GM18951 (cell line): ENCODE measurements at regions of chr14 and their contacts with region 1.

Region 1: DNA sequence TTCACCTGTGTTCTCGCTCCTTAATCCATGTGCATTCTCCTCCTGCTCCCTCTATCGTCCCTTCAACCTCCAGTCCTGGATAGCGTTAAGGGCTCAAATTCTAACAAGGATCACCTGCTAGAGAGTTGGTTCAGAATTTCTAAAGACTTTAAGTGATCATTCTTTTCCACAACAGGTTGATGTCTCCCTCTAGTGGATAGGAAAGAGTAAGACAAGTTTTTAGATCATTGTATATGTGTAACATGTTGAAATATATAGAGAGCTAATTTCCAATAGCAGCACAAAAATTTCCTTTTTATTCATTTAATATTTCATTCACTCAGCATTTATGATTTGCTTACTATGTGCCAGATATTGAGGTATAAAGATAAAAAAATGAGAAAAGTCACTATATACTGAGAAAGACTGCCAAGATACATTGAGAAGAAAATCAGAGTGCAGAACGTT is 9.3 kb upstream of the ESR2 start:
- POLR2A ChIP-seq: no peak

Region 2: DNA sequence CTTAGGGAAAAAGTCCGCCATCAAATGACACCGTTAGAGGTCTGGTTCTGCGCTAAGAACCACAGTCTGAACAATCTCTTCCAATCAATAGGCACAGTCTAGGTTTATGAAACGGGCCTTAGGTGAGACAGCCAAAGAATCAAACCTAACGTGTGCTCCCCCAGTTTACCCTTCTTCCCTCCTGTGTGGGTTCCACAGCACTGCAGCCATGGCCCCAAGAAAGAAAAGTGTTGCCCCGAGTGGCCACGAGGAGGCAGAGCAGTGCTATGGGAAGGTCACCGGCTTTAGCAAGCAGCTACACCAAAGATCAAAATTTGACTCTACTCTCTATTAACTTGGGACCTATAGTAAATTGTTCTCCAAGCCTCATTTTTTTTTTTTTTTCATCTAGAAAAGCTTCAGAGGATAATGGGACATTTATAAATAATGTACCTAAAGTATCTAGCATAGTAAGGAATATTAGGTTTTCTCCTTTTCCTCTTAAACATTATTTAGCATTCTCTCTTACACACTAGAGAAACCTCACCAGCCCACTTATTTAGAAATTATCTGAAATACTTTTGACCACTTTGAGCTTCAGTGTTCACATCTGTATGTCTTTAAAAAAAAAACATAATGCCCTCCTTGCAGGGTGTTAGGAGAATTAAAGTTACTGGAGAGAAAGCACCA is 914.6 kb before region 1 on chr14:
- in situ Hi-C with region 1: loop called (anchors 25 kb)
- POLR2A ChIP-seq: no peak

Region 3: DNA sequence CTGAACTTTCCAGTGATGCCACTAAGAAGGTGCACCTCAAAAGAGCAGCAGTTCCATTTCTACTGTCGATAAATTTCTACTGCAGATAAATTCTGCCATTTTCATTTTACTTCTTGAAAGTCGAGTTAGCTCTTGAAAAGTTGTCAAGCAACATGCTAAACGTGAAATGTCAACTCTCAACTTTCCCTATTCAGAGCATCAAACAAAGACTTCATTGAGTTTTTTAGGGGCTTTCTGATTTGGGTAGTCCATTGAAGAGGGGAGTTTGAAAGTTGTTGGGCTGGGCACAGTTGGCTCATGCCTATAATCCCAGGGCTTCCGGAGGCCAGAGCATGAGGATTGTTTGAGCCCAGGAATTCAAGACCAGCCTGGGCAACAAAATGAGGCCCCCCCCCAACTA is 510.1 kb before region 1 on chr14:
- in situ Hi-C with region 1: loop called (anchors 5 kb)
- POLR2A ChIP-seq: no peak